ENCODE measurements at regions of chr10 and their contacts with region 1.

Region 1: DNA sequence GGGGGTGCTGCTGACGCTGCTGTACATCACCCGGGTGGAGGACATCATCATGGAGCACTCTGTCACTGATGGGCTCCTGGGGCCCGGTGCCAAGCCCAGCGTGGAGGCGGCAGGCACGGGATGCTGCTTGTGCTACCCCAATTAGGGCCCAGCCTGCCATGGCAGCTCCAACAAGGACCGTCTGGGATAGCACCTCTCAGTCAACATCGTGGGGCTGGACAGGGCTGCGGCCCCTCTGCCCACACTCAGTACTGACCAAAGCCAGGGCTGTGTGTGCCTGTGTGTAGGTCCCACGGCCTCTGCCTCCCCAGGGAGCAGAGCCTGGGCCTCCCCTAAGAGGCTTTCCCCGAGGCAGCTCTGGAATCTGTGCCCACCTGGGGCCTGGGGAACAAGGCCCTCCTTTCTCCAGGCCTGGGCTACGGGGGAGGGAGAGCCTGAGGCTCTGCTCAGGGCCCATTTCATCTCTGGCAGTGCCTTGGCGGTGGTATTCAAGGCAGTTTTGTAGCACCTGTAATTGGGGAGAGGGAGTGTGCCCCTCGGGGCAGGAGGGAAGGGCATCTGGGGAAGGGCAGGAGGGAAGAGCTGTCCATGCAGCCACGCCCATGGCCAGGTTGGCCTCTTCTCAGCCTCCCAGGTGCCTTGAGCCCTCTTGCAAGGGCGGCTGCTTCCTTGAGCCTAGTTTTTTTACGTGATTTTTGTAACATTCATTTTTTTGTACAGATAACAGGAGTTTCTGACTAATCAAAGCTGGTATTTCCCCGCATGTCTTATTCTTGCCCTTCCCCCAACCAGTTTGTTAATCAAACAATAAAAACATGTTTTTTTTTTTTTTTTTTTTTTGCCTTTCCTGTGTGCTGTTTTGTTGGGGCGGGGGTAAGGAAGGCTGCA is 55.8 kb downstream of the TSPAN15 start:
- DNase-seq: no peak
- ATAC-seq: no peak

Region 2: DNA sequence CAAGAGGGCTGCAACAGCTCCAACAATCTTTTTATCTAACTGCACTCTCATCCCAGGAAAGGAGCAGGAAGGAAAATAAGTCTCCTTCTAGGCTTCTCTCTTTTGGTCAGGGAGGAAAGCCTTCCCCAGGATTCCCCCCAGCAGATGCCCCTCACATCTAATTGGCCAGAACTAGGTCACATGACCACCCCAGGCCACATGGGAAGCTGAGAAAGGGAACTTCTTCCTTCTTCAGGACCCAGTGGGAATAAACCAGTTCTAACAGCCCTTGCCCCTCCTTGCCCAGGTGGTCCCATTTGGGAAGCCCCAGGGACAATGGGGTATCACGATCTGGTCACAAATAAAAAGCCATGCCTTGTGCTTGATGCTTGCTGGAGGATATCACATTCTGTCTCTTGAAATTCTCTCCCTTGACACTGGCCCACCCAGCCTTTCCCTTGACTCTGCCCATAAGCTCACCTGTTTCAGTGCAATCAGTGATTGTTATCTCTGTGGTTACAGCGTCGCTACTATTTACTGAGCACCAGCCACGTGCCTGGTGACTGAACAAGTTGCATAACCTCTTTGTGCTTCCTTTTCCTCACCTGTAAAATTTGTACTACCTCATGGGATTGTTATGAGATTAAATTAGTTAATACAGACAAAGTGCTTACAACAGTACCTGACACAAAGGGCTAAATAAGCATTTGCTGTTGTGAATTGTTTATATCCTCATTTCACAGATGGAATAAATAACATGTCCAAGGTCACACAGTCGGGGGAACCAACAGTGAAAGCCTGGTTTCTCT is 81.4 kb before region 1 on chr10:
- intact Hi-C with region 1: loop called (anchors 1 kb)
- DNase-seq: no peak
- ATAC-seq: no peak

Region 3: GRCh38 chr10:69449841-69450240 is 57.2 kb before region 1 on chr10:
- intact Hi-C with region 1: loop called (anchors 5 kb)
- DNase-seq: no peak
- ATAC-seq: peak; percentile 67

Region 4: DNA sequence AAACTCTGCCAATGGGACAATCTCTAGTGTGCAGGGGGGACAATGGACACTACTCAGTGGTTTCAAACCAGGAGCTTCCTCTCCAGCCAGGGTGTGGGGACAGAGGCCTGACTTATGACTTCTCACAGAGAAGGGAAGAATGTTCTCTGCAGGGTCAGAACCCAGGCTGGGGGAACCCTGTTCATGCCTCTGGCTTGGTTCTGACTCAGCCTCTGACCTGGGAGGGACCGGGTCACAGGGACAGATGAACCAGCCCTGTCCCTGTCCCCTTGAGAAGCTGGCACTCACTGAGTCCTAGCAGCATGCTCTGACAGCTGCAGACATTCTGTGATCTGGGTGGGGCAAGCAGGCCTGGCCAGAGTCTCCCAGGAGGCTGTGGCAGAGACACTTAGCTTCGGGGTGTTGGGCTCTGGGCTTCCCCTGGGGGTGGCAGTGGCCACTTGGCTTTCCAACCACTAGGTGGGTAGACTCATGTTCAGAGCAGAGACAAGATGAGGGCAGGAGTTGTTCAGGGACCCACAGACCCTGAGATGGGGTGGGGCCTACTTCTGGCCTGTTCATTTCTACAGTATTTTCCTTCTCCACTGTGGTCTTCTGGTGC is 42.2 kb before region 1 on chr10:
- intact Hi-C with region 1: loop called (anchors 5 kb)
- DNase-seq: no peak
- ATAC-seq: peak; percentile 51

Region 5: DNA sequence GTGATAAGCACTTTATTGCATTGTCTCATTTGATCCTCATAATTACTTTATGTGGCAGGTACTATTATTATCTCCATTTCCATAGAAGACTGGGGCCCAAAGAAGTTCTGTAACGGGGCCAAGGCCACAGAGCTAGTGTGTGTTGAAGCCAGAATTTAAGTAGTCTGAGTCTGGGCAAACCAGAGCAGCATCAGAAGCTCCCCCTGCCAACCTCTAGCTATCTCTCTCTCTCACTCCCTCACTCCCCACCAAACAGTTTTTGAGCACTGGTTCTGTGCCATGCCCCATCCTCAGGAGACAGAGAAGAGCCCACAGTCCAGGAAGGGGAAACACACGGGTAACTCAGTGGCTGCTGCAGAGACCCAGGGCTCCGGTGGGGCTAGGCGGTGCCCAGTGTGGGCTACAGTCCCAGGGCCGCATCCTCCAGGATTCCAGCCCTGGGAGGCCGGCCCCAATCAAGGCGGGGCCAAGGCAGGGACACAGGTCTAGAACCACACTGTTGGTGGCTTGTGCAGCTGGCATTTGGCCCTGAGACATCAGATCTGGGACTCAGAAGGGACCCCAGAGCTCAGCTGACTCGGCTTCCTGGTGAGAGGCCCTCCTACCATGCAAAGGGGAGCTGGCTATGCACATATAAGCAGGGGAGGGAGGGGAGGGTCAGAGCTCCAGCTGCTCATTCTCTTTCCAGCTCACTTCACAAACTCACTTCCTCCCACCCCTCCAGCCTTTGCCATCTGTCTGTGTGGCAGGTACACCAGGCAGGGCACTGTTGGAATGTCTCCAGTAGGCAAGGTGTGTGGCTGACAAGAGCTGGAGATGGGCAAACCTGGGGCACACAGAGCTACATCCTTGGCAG is 329.0 kb after region 1 on chr10:
- intact Hi-C with region 1: no loop called
- DNase-seq: no peak
- ATAC-seq: no peak

Measured in Right ventricle myocardium inferior (tissue), 1 donor.